Posterior cingulate gyrus (tissue), 11 donors: ENCODE measurements at regions of chr6 and their contacts with region 1.

Region 1: DNA sequence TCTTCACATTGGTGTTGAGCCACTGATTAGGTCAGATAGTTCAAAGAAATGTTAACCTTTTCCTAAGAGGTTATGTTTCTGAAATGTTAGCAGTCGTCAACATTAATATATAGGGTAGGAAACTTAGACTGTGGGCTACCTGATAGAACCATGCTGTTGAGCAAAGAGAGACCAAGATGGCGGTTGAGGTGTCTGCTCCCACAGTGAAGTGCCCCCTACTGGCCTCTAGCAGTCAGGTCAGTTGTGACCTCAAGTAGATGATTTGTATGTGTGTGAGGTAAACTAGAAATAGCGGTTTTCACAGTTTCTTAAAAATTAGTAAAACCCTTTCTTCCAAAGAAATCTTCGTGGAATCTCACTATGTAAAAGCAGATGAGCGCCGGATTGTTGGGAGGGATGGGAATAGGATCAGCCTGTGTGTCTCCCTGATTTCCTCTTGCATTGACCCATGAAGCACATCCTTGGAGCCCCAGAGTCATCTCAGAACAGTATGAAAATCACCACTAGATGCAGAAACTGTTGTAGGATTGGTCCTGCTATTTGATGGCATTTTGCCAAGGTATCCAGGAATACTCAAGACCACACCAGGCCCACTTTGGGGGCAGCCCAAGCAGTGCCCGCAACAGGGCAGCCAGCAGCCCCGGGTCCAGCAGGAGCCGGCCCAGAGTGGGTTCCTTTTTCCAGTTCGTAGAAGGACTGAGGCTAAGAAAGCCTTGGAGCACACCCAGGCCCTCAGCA is 40.4 kb downstream of the MTHFD1L start:
- DNase-seq: no peak

Region 2: GRCh38 chr6:151004415-151005024 is 98.6 kb after region 1 on chr6:
- intact Hi-C with region 1: loop called (anchors 5 kb)
- DNase-seq: no peak

Region 3: GRCh38 chr6:151082079-151082478 is 176.1 kb after region 1 on chr6:
- intact Hi-C with region 1: no loop called
- DNase-seq: no peak

Region 4: GRCh38 chr6:151757506-151758245 is 851.7 kb after region 1 on chr6:
- intact Hi-C with region 1: no loop called
- DNase-seq: no peak